Posterior vena cava (tissue), 2 donors: ENCODE measurements at regions of chr3 and their contacts with region 1.

Region 1: DNA sequence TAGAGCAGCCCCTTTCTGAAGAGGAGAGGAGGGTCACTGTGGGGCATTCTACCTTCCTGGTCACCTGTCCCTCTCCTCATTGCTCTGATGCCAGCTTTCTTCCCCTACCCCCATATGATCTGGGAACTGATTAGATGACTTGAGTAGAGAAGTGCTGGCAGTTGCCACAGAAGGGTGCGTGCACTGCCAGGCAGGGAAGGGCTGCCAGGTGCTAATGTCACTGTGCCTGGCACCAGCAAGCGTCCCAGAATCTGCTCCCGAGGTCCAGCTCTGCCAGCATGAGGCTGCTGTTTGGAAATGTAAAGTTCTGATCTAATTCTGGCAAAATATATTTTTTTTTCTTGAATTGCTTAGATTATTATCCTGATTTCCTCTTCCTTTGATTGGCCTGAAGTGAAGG is 52.8 kb downstream of the PPM1L start:
- DNase-seq: no peak

Region 2: DNA sequence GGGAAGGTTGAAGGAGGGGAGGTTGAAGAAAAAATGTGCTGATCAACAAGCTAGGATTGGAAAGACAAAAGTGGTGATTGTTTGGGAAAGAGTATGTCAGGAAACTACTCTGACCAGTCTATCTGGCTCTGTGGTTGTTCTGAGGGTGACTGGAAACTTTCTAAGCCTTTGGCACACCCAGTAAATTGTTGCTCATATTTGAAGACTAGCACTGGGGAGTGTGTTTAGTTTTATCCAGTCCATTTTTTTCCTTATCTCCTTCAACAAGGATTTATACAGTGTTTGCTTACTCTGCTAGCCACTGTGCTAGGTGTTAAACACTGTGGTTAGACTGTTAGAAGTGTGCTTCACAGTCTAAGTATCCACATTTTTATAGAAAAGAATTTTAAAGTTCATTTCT is 24.0 kb before region 1 on chr3:
- intact Hi-C with region 1: loop called in 1 of 2 experiments (anchors 2 kb)
- DNase-seq: no peak

Region 3: DNA sequence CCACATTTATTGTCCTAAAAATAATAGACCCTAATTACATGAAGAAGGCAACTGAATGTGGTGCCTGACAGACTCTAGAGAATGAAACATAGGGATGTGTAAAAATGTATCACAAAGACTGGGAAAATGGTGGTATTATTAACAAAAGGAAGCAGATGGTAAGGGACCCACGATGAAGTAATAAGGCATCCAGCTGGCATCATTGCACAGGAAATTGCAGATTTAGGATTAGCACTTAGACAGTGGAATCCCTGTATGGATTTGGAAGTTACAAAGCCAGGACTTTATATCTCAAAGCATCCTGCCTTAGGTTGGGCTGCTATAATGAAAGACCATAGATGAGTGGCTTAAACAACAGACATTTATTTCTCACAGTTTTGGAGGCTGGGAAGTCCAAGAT is 51.5 kb after region 1 on chr3:
- intact Hi-C with region 1: no loop called
- DNase-seq: no peak